ENCODE measurements at regions of chr3 and their contacts with region 1.

Region 1: GRCh38 chr3:179322286-179323196 is at the start of gene ZNF639:
- DNase-seq: peak; percentile 75 to 83
- ATAC-seq: peak; percentile 80
- total RNA-seq, gene ZNF639: 22.6 to 25.3 TPM

Region 2: DNA sequence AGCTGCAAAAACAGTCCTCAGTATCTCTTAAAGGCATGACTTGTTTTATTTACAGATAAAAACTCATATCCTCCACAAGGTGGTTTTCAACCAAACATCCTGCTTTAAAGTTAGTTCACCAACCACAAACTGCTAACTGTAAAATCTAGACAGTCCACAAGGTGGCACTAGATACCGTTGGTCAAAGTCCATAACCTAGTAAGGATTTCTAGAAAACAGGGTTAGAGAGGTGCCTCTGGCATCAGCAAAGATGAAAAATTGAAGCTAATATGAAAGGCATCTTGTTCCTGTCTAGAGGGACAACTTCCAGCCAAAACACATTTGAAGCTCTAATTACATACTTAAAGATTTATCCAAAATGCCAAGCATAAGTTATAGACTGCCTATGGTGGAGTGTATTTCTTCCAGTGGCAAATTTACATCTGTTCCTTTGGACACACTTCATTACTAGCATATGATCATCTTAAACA is 307.0 kb before region 1 on chr3:
- intact Hi-C with region 1: loop called in 1 of 2 experiments (anchors 2 kb)
- DNase-seq: peak in 1 of 2 donors; percentile 16
- ATAC-seq: peak; percentile 89

Region 3: DNA sequence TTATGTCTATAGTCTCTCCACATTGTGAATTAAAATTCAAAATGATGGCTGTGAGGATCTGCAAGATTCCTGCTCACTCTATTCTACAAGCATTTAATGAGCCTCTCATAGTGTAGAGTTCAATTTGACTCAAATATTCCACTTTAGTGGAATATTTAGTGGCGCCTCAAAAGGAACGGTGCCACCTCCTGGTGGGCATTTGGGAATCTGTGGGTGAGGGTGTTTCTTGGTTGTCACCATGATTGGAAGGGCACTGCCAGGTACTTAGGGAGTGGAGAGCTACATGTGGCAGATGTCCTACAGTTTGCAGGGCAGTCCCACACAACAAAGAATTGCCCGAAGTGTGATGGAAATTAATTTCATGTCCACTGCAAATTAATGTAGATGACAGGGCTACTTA is 50.2 kb before region 1 on chr3:
- intact Hi-C with region 1: no loop called
- DNase-seq: no peak
- ATAC-seq: no peak

Region 4: DNA sequence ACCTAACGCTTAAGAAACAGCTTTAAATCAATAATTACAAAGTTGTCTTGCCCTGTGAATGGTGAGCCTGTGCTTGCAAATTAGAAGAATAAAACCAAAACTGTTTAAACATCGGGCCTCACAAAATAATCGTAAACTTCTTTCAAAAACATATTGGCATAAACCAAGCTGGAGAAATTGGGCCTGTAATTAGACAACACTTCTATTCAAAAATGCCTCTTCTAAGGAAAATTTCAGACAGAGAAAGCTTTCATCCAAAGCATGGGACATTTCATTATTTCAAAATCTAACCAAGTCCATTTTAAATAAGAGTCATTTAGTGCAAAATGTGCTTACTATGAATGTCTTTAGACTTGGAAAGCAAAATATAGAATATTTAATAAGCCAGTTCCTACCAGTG is 164.3 kb after region 1 on chr3:
- intact Hi-C with region 1: no loop called
- DNase-seq: no peak
- ATAC-seq: no peak

Measured in left colon (tissue), 2 donors.